ENCODE measurements at regions of chr3 and their contacts with region 1.

Region 1: GRCh38 chr3:88113311-88114162 is 36.2 kb upstream of the C3orf38 start:
- DNase-seq: peak; percentile 37
- H3K4me3 ChIP-seq: no peak overlapping the region; a peak in 1 of 4 replicates
- H3K27ac ChIP-seq: 0 out of 4 replicates have a peak overlapping the region, but pooled peaks of 1 of the 2 experiments have one; percentile 9
- H3K4me1 ChIP-seq: peaks cover 0 to 9% of the 10 kb centered on the region in 2 experiments; a peak in 1 of 4 replicates
- H3K27me3 ChIP-seq: no peaks in the 10 kb centered on the region
- CTCF ChIP-seq: peak; percentile 86
- EP300 ChIP-seq: no peak
- RAD21 ChIP-seq: peak; percentile 80

Region 2: DNA sequence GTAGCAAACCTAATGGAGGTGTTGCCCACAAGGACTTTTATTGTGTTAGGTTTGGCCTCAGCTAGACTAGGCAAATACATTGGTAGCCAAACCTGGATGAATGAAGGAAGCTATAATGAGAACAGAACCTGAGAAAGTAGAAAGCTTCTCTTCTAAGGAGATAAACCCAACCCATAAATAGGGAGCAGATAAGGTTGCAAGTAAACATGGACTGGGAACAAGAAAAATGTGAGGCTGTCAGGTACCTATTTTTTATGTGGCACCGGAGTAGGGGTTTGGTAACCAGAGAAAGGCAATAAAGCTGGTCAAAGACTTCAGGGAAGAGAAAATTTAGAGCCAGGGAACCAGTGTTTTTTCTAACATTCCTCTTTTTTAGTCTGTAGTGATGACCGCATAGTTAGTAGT is 29.4 kb before region 1 on chr3:
- CTCF ChIA-PET with region 1: interaction called, 10 read pairs
- POLR2A ChIA-PET with region 1: no interaction called
- DNase-seq: no peak
- H3K4me3 ChIP-seq: no peak overlapping the region
- H3K27ac ChIP-seq: no peak overlapping the region
- H3K4me1 ChIP-seq: no peaks in the 10 kb centered on the region
- H3K27me3 ChIP-seq: no peaks in the 10 kb centered on the region
- CTCF ChIP-seq: no peak
- EP300 ChIP-seq: no peak
- RAD21 ChIP-seq: no peak

Region 3: GRCh38 chr3:88101142-88101541 is 12.4 kb before region 1 on chr3:
- CTCF ChIA-PET with region 1: interaction called, 12 read pairs
- POLR2A ChIA-PET with region 1: no interaction called
- DNase-seq: no peak
- H3K4me3 ChIP-seq: no peak overlapping the region
- H3K27ac ChIP-seq: no peak overlapping the region
- H3K4me1 ChIP-seq: no peaks in the 10 kb centered on the region; a peak in 1 of 4 replicates
- H3K27me3 ChIP-seq: no peaks in the 10 kb centered on the region
- CTCF ChIP-seq: no peak
- EP300 ChIP-seq: no peak
- RAD21 ChIP-seq: no peak

Region 4: GRCh38 chr3:88131695-88132094 is 18.2 kb after region 1 on chr3:
- CTCF ChIA-PET with region 1: interaction called, 31 read pairs
- POLR2A ChIA-PET with region 1: no interaction called
- DNase-seq: no peak
- H3K4me3 ChIP-seq: no peak overlapping the region
- H3K27ac ChIP-seq: peak overlapping the region in 1 of 2 experiments; percentile 13; a peak in 1 of 4 replicates
- H3K4me1 ChIP-seq: peaks cover 9 to 10% of the 10 kb centered on the region in 2 experiments; a peak in 3 of 4 replicates
- H3K27me3 ChIP-seq: no peaks in the 10 kb centered on the region
- CTCF ChIP-seq: no peak
- EP300 ChIP-seq: no peak
- RAD21 ChIP-seq: no peak

Measured in SK-N-SH (cell line).